Endothelial cell of umbilical vein (primary cell): ENCODE measurements at regions of chr4 and their contacts with region 1.

Region 1: GRCh38 chr4:37603070-37603468 is 83.1 kb downstream of the RELL1 start:
- DNase-seq: peak; percentile 77
- H3K4me3 ChIP-seq: no peak overlapping the region
- H3K27ac ChIP-seq: no peak overlapping the region
- H3K4me1 ChIP-seq: peaks cover 13% of the 10 kb centered on the region
- H3K27me3 ChIP-seq: no peaks in the 10 kb centered on the region
- CTCF ChIP-seq: peak; percentile 94 to 96
- POLR2A ChIP-seq: no peak

Region 2: GRCh38 chr4:37452952-37453280 is 150.2 kb before region 1 on chr4:
- CTCF ChIA-PET with region 1: interaction called, 13 read pairs
- POLR2A ChIA-PET with region 1: no interaction called
- dilution Hi-C with region 1: no loop called
- intact Hi-C with region 1: no loop called
- DNase-seq: peak; percentile 68
- H3K4me3 ChIP-seq: no peak overlapping the region
- H3K27ac ChIP-seq: no peak overlapping the region
- H3K4me1 ChIP-seq: peaks cover 9% of the 10 kb centered on the region
- H3K27me3 ChIP-seq: peaks cover 28 to 36% of the 10 kb centered on the region in 2 experiments
- CTCF ChIP-seq: peak; percentile 36 to 54
- POLR2A ChIP-seq: no peak

Region 3: DNA sequence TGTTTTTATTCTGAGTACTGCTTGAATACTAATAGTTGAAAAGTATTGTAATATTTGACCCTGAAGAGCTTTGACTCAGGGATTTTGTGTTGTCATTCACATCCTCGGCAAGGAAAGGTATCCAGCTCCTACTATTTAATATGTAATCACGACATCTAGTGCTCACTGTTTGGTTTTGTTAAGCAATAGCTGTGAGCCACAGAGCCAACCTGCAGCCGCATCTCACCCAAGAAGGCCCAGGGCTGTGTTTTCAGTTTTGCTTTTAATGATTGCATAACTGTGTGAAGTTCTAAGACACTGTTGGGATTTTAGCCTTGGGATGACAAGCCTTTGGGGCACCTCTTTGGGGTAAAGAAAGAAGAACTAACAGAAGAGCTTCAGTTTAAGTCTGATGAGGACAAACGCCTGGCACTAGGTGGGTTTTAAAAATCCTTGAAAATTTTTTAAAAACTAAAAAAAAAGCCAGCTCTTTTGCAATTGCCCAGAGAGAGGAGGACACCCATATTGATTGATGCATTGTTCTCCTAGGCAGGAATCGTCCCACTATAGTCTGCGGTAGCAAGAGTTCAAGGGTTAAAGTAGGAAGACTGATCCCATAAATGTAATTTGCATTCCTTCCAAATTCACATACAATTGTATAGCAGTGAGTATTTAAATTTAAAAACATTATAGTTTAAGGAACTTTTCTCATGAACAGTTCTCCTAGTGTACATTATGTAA is 74.7 kb before region 1 on chr4:
- CTCF ChIA-PET with region 1: no interaction called
- POLR2A ChIA-PET with region 1: no interaction called
- dilution Hi-C with region 1: no loop called
- intact Hi-C with region 1: no loop called
- DNase-seq: no peak
- H3K4me3 ChIP-seq: no peak overlapping the region
- H3K27ac ChIP-seq: no peak overlapping the region
- H3K4me1 ChIP-seq: no peaks in the 10 kb centered on the region
- H3K27me3 ChIP-seq: no peaks in the 10 kb centered on the region
- CTCF ChIP-seq: no peak
- POLR2A ChIP-seq: no peak

Region 4: DNA sequence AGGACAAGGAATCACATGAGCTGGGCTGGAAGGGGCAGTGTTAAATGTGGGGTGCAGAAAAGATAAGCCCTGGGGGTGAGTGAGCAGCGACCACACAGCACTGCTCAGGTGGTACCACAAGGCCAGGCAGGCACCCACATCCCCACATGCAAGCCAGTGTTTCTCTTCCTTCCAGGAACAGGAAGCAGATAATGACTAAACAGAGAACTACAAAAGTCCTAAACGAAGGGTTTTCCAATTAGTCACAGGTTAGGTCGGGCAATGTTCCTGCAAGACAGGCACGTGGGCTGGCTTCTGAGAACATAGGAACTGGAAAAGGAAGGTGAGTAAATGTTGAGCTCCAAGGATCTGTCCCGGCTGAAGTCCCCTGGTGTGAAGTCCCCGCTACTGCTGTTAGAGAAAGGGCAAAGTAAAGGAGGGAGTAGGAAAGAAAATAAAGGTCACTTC is 63.6 kb after region 1 on chr4:
- CTCF ChIA-PET with region 1: interaction called, 34 read pairs
- POLR2A ChIA-PET with region 1: no interaction called
- dilution Hi-C with region 1: no loop called
- intact Hi-C with region 1: loop called (anchors 1 kb)
- DNase-seq: peak; percentile 96
- H3K4me3 ChIP-seq: peak overlapping the region in 1 of 3 experiments; percentile 42
- H3K27ac ChIP-seq: peak overlapping the region; percentile 99
- H3K4me1 ChIP-seq: peaks cover 67% of the 10 kb centered on the region
- H3K27me3 ChIP-seq: no peaks in the 10 kb centered on the region
- CTCF ChIP-seq: peak; percentile 26 to 37
- POLR2A ChIP-seq: peak; percentile 56

Region 5: GRCh38 chr4:37793562-37793961 is 190.5 kb after region 1 on chr4:
- CTCF ChIA-PET with region 1: interaction called, 16 read pairs
- POLR2A ChIA-PET with region 1: no interaction called
- dilution Hi-C with region 1: no loop called
- intact Hi-C with region 1: loop called (anchors 1 kb)
- DNase-seq: peak; percentile 13
- H3K4me3 ChIP-seq: no peak overlapping the region
- H3K27ac ChIP-seq: no peak overlapping the region
- H3K4me1 ChIP-seq: no peaks in the 10 kb centered on the region
- H3K27me3 ChIP-seq: peaks cover 3 to 7% of the 10 kb centered on the region in 2 experiments
- CTCF ChIP-seq: peak; percentile 30 to 52
- POLR2A ChIP-seq: no peak

Region 6: GRCh38 chr4:37826295-37827029 is 223.4 kb after region 1 on chr4 and contains the start of gene PGM2:
- CTCF ChIA-PET with region 1: interaction called, 14 read pairs
- POLR2A ChIA-PET with region 1: no interaction called
- dilution Hi-C with region 1: no loop called
- intact Hi-C with region 1: no loop called
- DNase-seq: peak; percentile 91
- H3K4me3 ChIP-seq: peak within 1 kb of the TSS; percentile 45 to 96 (median 95)
- H3K27ac ChIP-seq: peak within 1 kb of the TSS; percentile 56
- H3K4me1 ChIP-seq: peaks cover 19% of the 10 kb centered on the region
- H3K27me3 ChIP-seq: no peaks in the 10 kb centered on the region
- CTCF ChIP-seq: peak in 1 of 2 donors; percentile 16
- POLR2A ChIP-seq: peak; percentile 87
- total RNA-seq, gene PGM2: 45.8 and 53.9 TPM in 2 replicates

Region 7: DNA sequence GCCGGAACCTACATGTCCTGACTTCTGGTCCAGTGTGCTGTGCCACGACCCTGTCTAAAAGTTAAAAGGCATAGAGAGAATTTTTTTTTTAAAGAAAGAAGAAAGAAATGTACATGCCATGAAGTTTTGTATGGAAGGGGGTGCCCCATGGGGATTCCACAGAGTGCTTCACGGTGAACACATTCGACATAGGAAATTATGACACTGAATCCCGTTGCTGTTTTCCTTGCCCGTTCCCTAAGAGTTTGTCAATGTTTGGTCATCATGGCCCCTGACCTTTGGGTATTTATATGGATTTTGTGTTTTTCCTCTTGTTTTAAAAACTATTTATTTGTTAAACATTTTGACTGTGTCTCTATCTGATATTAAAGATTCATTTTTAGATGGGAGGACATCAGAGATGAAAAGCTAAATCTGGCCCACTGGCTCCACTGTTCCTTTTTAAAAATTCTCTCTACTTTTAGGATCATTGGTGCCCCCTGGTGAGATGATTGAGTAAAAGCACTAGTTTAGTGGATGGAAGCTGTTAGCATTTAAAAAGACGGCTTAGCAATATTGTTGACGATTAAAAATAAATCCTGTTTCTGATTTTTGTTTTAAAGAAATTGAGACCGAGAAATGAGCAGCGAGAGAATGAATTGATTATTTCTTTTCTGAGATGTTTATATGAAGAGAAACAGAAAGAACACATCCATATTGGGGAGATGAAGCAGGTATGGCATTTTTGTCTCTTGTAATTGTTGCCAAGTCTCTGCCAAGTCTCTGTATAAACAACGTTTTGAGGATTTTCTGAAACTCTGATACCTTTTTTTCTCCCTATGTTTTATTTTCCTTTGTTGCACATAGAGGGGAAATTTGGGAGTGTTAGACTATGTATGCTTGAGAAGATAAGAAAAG is 432.2 kb after region 1 on chr4:
- CTCF ChIA-PET with region 1: interaction called, 21 read pairs
- POLR2A ChIA-PET with region 1: no interaction called
- dilution Hi-C with region 1: no loop called
- intact Hi-C with region 1: loop called (anchors 1 kb)
- DNase-seq: peak; percentile 68
- H3K4me3 ChIP-seq: no peak overlapping the region
- H3K27ac ChIP-seq: peak overlapping the region; percentile 31
- H3K4me1 ChIP-seq: peaks cover 5% of the 10 kb centered on the region
- H3K27me3 ChIP-seq: no peaks in the 10 kb centered on the region
- CTCF ChIP-seq: peak; percentile 49 to 50
- POLR2A ChIP-seq: no peak